ENCODE measurements at regions of chr2 and their contacts with region 1.

Region 1: GRCh38 chr2:235116885-235117492 is 165.2 kb downstream of the SH3BP4 start:
- DNase-seq: no peak
- H3K4me3 ChIP-seq: no peak overlapping the region
- H3K27me3 ChIP-seq: no peaks in the 10 kb centered on the region
- CTCF ChIP-seq: peak; percentile 49

Region 2: DNA sequence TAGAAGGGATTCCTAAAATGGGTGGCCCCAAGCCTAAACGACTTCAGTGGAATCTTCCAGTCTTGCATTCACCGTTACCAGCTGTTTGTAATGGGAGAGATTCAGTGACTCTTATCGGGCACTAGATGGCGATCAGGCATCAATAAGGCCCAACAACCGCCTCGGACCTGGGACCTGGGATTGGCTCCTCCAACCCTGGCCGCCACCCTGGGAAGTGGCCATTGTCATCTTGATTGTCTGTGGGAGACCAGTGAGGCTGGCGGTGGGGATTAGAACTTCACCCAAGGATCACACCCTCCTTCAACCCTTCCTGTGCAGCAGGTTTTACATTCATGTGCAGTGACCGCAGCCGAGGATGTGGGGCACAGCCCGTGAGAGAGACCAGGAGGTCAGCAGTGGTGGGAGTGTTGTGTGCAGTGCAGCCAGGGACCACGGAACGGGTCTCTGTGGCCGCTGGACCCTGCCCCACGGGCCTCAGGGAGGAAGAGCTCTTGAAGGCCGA is 981.2 kb before region 1 on chr2:
- CTCF ChIA-PET with region 1: interaction called, 12 read pairs
- POLR2A ChIA-PET with region 1: no interaction called
- DNase-seq: no peak
- H3K4me3 ChIP-seq: no peak overlapping the region
- H3K27me3 ChIP-seq: no peaks in the 10 kb centered on the region
- CTCF ChIP-seq: peak; percentile 83

Region 3: DNA sequence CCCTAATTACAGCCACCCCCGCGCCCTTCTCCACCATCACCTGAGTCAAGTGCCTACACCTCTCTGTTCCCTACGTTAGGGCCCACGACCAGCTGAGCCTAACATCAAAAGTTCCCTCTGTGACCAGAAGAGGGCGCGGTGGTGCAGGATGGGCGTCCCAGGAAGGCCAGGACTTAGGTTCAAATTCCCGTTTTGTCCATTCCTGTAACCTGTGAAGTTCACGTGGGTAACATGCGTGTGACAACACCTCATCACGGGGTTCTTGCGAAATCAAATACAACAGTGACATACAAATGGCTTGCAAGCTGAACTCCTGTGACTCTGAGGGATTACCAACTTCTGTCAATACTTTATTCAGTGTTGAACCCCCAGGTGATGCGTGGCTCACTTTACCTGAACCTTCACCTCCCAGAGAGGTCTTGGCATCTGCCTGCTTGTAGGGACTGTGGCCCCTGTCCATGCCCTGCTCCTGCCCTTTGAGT is 828.0 kb before region 1 on chr2:
- CTCF ChIA-PET with region 1: interaction called, 10 read pairs
- POLR2A ChIA-PET with region 1: no interaction called
- DNase-seq: no peak
- H3K4me3 ChIP-seq: no peak overlapping the region
- H3K27me3 ChIP-seq: no peaks in the 10 kb centered on the region
- CTCF ChIP-seq: peak; percentile 76

Region 4: GRCh38 chr2:234550511-234551107 is 566.4 kb before region 1 on chr2:
- CTCF ChIA-PET with region 1: interaction called, 93 read pairs
- POLR2A ChIA-PET with region 1: no interaction called
- DNase-seq: no peak
- H3K4me3 ChIP-seq: no peak overlapping the region
- H3K27me3 ChIP-seq: no peaks in the 10 kb centered on the region
- CTCF ChIP-seq: peak; percentile 92

Region 5: GRCh38 chr2:234555720-234556119 is 561.3 kb before region 1 on chr2:
- CTCF ChIA-PET with region 1: interaction called, 17 read pairs
- POLR2A ChIA-PET with region 1: no interaction called
- DNase-seq: no peak
- H3K4me3 ChIP-seq: no peak overlapping the region
- H3K27me3 ChIP-seq: no peaks in the 10 kb centered on the region
- CTCF ChIP-seq: no peak